CD4-positive, alpha-beta T cell (primary cell): ENCODE measurements at regions of chr5 and their contacts with region 1.

Region 1: DNA sequence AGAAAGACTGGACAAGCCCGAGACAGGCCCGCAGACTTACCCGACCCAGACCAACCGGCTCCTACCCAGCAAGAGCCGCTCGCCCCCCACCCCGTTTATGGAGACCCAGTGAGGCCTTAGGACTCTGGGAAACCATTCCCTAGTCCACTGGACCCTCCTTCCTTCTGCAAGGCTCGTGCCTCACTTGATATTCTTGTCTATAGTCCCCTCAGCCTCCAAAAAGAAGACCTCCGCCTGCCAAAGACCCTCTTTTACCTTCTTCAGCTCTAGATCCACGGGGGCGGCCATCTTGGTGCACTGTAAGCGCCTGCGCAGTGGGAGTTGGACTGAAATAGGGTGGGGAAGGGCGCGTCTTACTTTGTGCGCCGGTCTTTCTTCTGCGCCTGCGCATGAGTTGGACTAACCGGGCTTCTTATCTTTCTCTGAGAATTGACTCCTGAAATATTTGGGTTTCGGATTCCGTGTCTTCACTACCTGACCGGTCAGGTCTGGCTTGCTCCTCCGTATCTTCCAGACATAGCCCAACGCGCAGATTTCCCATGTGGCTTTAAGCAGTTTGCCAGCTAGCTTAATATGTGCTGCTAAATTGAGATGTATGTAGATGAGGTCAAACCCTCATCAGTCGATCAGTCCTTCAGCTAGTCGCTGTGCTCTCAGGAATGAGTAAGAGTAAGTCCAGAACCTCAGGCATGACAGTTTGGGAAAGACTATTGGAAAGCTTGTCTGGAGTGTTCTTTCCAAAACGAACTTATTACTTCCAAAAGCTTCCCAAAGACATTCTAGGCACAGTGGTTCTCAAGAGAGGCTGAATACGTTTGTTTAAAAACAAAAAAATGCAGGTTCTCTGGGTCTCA is at the start of gene PFDN1:
- DNase-seq: peak; percentile 79 to 97 (median 88)
- ATAC-seq: peak; percentile 99
- H3K4me3 ChIP-seq: peak within 1 kb of the TSS; percentile 73
- H3K4me3 Mint-ChIP-seq: peak within 1 kb of the TSS; percentile 97
- H3K27ac ChIP-seq: peak within 1 kb of the TSS; percentile 38 to 42
- H3K27ac Mint-ChIP-seq: peak within 1 kb of the TSS; percentile 92
- H3K4me1 ChIP-seq: peaks cover 14% of the 10 kb centered on the region
- H3K4me1 Mint-ChIP-seq: peaks cover 30% of the 10 kb centered on the region
- H3K27me3 ChIP-seq: no peaks in the 10 kb centered on the region
- H3K27me3 Mint-ChIP-seq: no peaks in the 10 kb centered on the region
- CTCF ChIP-seq: no peak
- total RNA-seq, gene PFDN1: 21.3 to 22.0 TPM

Region 2: DNA sequence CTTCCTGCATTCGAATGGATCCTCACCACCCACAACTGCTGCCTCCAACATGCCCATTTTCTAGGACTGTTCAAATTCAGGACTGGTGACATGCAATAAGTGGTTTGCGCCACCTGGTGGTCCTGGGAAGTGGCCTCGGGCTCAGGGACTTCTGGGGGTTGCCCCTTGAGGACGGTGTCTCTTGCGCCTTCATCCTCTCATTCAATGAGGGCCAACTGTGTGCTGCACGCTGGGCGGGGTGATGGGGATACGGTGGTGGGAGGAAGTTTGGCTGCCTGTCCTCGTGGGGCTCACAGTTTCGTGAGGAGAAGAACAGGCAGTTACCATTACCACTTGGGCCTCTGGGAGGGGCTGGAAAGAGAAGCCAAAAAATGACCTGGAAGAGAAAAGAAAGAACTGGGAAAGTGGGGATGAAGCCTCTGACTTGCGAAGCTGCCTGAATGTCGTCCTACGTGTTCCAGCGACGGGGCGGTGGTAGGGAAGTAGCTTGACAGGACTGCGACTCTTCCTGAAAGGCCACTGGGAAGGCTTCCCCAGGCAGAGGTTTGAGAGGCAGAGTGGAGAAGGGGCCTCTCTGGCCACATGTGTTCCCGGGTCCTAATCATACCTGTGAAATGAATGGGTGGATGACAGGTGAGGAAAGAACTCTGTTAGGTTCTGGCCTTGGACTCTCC is 458.4 kb before region 1 on chr5:
- CTCF ChIA-PET with region 1: no interaction called
- POLR2A ChIA-PET with region 1: no interaction called
- intact Hi-C with region 1: no loop called
- DNase-seq: peak; percentile 45 to 81 (median 66)
- ATAC-seq: no peak
- H3K4me3 ChIP-seq: no peak overlapping the region
- H3K4me3 Mint-ChIP-seq: peak overlapping the region; percentile 74
- H3K27ac ChIP-seq: no peak overlapping the region
- H3K27ac Mint-ChIP-seq: no peak overlapping the region
- H3K4me1 ChIP-seq: peaks cover 15% of the 10 kb centered on the region
- H3K4me1 Mint-ChIP-seq: peaks cover 17% of the 10 kb centered on the region
- H3K27me3 ChIP-seq: peaks cover 12 to 21% of the 10 kb centered on the region in 2 experiments
- H3K27me3 Mint-ChIP-seq: peaks cover 38% of the 10 kb centered on the region
- CTCF ChIP-seq: peak; percentile 70

Region 3: DNA sequence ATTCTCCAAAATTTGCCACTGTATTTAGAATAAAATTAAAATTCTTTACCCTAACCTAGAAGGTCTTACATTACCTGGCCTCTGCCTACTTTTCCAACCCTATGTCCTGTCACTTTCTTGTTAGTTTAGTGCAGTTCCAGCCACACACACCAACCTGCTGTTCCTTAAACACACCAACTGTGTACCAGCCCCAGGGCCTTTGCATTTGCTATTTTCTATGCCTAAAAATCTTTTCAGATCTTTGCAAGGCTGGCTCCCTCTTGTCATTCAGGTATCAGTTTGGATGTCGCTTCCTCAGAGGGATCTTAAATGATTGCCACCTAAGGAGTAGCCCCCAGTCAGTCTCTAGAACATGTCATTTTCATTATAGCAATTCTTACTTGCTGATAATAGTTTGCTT is 242.2 kb before region 1 on chr5:
- CTCF ChIA-PET with region 1: no interaction called
- POLR2A ChIA-PET with region 1: no interaction called
- intact Hi-C with region 1: no loop called
- DNase-seq: no peak
- ATAC-seq: no peak
- H3K4me3 ChIP-seq: no peak overlapping the region
- H3K4me3 Mint-ChIP-seq: no peak overlapping the region
- H3K27ac ChIP-seq: no peak overlapping the region
- H3K27ac Mint-ChIP-seq: no peak overlapping the region
- H3K4me1 ChIP-seq: no peaks in the 10 kb centered on the region
- H3K4me1 Mint-ChIP-seq: no peaks in the 10 kb centered on the region
- H3K27me3 ChIP-seq: peaks cover 12 to 47% of the 10 kb centered on the region in 2 experiments
- H3K27me3 Mint-ChIP-seq: peaks cover 20% of the 10 kb centered on the region
- CTCF ChIP-seq: no peak

Region 4: GRCh38 chr5:140141241-140141640 is 161.8 kb before region 1 on chr5:
- CTCF ChIA-PET with region 1: no interaction called
- POLR2A ChIA-PET with region 1: no interaction called
- intact Hi-C with region 1: no loop called
- DNase-seq: no peak
- ATAC-seq: no peak
- H3K4me3 ChIP-seq: no peak overlapping the region
- H3K4me3 Mint-ChIP-seq: no peak overlapping the region
- H3K27ac ChIP-seq: no peak overlapping the region
- H3K27ac Mint-ChIP-seq: no peak overlapping the region
- H3K4me1 ChIP-seq: peaks cover 26% of the 10 kb centered on the region
- H3K4me1 Mint-ChIP-seq: peaks cover 25% of the 10 kb centered on the region
- H3K27me3 ChIP-seq: peaks cover 12 to 15% of the 10 kb centered on the region in 2 experiments
- H3K27me3 Mint-ChIP-seq: peaks cover 17% of the 10 kb centered on the region
- CTCF ChIP-seq: no peak

Region 5: GRCh38 chr5:140346348-140347101 is 43.5 kb after region 1 on chr5 and contains the start of gene HBEGF:
- CTCF ChIA-PET with region 1: interaction called, 5 read pairs
- POLR2A ChIA-PET with region 1: no interaction called
- intact Hi-C with region 1: loop called (anchors 5 kb)
- DNase-seq: peak in 13 of 14 experiments; percentile 11 to 72 (median 46)
- ATAC-seq: peak; percentile 67
- H3K4me3 ChIP-seq: peak within 1 kb of the TSS; percentile 56
- H3K4me3 Mint-ChIP-seq: peak within 1 kb of the TSS; percentile 83
- H3K27ac ChIP-seq: no peak within 1 kb of the TSS
- H3K27ac Mint-ChIP-seq: peak within 1 kb of the TSS; percentile 1
- H3K4me1 ChIP-seq: peaks cover 49% of the 10 kb centered on the region
- H3K4me1 Mint-ChIP-seq: peaks cover 50% of the 10 kb centered on the region
- H3K27me3 ChIP-seq: peaks cover 0 to 4% of the 10 kb centered on the region in 2 experiments
- H3K27me3 Mint-ChIP-seq: peaks cover 4% of the 10 kb centered on the region
- CTCF ChIP-seq: peak; percentile 30
- total RNA-seq, gene HBEGF: 3.6 to 4.2 TPM

Region 6: DNA sequence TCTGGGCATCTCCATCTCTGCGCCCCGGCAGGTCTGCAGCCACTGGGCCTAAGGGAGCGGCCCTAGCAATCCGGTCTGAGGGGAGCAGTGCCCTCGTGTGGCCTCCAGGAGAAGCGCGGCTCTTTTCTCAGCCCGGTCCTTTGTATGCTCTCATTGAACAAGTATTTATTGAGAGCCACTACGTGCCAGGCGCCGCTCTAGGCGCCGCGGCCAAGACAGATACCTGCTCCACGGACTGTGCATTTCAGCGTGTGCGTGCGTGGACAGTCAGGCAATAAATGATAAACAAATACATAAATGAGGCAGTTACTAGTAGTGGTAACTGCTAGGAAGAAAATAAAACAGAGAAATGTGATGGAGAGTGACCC is 54.7 kb after region 1 on chr5:
- CTCF ChIA-PET with region 1: interaction called, 4 read pairs
- POLR2A ChIA-PET with region 1: no interaction called
- intact Hi-C with region 1: loop called in 1 of 2 experiments (anchors 2 kb)
- DNase-seq: peak; percentile 56 to 87 (median 65)
- ATAC-seq: peak; percentile 98
- H3K4me3 ChIP-seq: peak overlapping the region; percentile 40
- H3K4me3 Mint-ChIP-seq: no peak overlapping the region
- H3K27ac ChIP-seq: no peak overlapping the region
- H3K27ac Mint-ChIP-seq: no peak overlapping the region
- H3K4me1 ChIP-seq: peaks cover 15% of the 10 kb centered on the region
- H3K4me1 Mint-ChIP-seq: peaks cover 10% of the 10 kb centered on the region
- H3K27me3 ChIP-seq: no peaks in the 10 kb centered on the region
- H3K27me3 Mint-ChIP-seq: peaks cover 4% of the 10 kb centered on the region
- CTCF ChIP-seq: peak; percentile 77

Region 7: GRCh38 chr5:140639148-140639979 is 336.4 kb after region 1 on chr5 and contains the start of gene TMCO6:
- CTCF ChIA-PET with region 1: no interaction called
- POLR2A ChIA-PET with region 1: no interaction called
- intact Hi-C with region 1: loop called in 1 of 2 experiments (anchors 5 kb)
- DNase-seq: peak; percentile 94 to 99 (median 96)
- ATAC-seq: peak; percentile 98
- H3K4me3 ChIP-seq: peak within 1 kb of the TSS; percentile 73
- H3K4me3 Mint-ChIP-seq: peak within 1 kb of the TSS; percentile 92
- H3K27ac ChIP-seq: peak within 1 kb of the TSS; percentile 77 to 94
- H3K27ac Mint-ChIP-seq: peak within 1 kb of the TSS; percentile 93
- H3K4me1 ChIP-seq: peaks cover 28% of the 10 kb centered on the region
- H3K4me1 Mint-ChIP-seq: peaks cover 34% of the 10 kb centered on the region
- H3K27me3 ChIP-seq: no peaks in the 10 kb centered on the region
- H3K27me3 Mint-ChIP-seq: no peaks in the 10 kb centered on the region
- CTCF ChIP-seq: peak; percentile 76
- total RNA-seq, gene TMCO6: 20.9 to 21.1 TPM

Region 8: DNA sequence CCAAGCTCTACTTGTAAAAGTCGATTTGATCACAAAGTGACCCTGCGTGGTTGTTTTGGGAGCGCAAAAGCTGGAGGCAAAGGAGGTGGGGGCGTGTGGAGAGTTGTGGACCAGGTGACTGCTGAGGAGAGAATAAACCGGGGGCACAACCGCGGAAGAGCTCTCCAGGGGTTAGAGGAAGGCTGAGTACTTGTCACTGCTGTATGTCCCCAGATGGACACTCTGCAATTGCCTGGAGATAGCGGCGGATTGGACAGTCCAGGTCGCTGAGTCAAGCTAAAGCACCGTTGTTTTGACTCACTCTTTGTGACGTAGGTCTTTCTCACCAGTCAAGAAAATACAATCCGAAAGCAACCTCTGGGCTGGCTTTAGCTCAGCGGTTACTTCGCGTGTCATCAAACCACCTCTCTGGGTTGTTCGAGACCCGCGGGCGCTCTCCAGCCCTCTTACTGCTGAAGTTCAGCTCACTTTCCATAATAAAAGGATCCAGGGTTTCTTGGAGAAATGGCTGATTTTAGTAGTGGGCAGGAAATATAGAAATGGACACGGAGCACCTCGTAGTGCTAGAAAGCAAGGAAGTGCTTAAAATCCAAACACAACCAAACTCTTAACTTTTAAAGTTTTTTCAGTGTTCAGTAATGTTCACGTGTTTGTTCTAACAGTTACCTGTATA is 422.9 kb after region 1 on chr5:
- CTCF ChIA-PET with region 1: no interaction called
- POLR2A ChIA-PET with region 1: no interaction called
- intact Hi-C with region 1: no loop called
- DNase-seq: peak; percentile 25 to 83 (median 49)
- ATAC-seq: peak; percentile 91
- H3K4me3 ChIP-seq: peak overlapping the region; percentile 17
- H3K4me3 Mint-ChIP-seq: peak overlapping the region; percentile 83
- H3K27ac ChIP-seq: no peak overlapping the region
- H3K27ac Mint-ChIP-seq: peak overlapping the region; percentile 89
- H3K4me1 ChIP-seq: peaks cover 7% of the 10 kb centered on the region
- H3K4me1 Mint-ChIP-seq: peaks cover 16% of the 10 kb centered on the region
- H3K27me3 ChIP-seq: peaks cover 0 to 6% of the 10 kb centered on the region in 2 experiments
- H3K27me3 Mint-ChIP-seq: peaks cover 42% of the 10 kb centered on the region
- CTCF ChIP-seq: no peak